Brain microvascular endothelial cell (primary cell): ENCODE measurements at regions of chr5 and their contacts with region 1.

Region 1: GRCh38 chr5:17398439-17398838 is 99.6 kb upstream of the TAF11L2 start:
- DNase-seq: peak; percentile 89
- H3K4me3 ChIP-seq: no peak overlapping the region
- H3K27ac ChIP-seq: no peak overlapping the region
- H3K27me3 ChIP-seq: no peaks in the 10 kb centered on the region
- CTCF ChIP-seq: no peak

Region 2: DNA sequence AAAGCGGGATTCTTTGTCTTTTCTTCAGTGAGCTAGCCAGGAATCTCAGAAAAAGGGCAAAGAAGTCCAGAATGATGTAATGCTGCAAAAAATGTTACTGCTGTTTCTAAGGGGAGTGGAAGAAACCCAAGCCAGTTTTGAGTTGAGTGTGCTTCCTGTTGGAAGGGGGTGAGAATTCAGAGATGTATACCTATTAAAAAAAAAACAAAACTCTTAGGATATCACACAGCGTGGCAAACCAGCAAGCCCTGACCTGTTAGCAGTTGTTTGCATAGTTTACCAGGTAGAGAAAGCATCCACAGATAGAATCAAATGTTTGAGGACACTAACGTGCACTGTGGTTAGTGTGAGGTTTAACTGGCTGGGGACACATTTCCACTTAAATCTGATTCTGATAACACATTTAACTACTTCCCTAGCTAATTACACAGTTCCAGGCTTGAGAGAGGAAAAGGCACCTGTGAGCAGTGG is 169.6 kb before region 1 on chr5:
- in situ Hi-C with region 1: loop called (anchors 25 kb)
- DNase-seq: no peak
- H3K4me3 ChIP-seq: no peak overlapping the region
- H3K27ac ChIP-seq: peak overlapping the region; percentile 49
- H3K27me3 ChIP-seq: no peaks in the 10 kb centered on the region
- CTCF ChIP-seq: no peak